MCF 10A (cell line): ENCODE measurements at regions of chr12 and their contacts with region 1.

Region 1: DNA sequence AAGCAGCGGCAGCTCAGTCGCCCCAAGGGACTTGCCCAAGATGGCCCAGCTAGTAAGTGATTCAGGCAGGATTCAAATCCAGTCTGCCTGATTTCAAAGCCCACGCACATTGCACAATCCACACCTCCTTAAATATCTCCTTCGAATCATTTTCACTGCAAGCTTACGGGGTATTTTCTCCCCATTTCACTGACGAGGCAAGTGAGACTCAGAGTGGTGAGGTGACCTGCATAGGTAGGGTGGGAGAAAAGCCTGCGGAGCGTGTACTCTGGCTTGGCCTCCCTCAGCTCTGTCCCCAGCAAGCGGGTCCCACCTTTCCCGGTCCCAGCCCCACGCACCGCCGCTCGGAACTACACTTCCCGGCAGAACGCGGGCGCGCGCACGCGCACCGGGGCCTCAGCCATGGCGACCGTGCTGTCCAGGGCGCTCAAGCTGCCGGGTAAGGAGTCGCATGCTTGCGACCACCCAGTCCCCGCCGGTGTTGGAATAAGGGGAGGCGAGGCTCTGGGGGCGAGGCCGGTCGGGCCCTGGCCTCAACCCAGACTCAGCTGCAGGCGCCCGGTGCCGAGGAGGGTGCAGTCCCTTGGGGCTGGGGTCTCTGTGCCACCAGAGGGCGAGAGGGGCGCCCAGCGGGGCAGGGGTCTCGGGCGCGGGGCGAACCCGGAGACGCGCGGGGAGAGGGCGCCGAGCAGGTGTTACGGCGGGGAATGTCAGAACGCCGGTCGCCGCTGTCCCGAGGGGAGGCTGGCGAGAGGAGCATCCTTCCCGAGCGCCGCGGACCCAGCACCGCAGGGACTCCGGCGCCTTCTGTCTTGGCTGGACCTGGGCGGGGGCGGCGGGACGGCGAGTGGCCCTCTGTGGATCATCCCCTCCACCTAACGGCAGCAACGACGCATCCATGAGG is at the start of gene FAM234B:
- DNase-seq: peak; percentile 66
- H3K4me3 Mint-ChIP-seq: peak within 1 kb of the TSS; percentile 85
- H3K27ac Mint-ChIP-seq: peak within 1 kb of the TSS; percentile 82
- H3K4me1 Mint-ChIP-seq: peaks cover 10% of the 10 kb centered on the region
- H3K27me3 Mint-ChIP-seq: no peaks in the 10 kb centered on the region
- CTCF ChIP-seq: peak; percentile 12
- total RNA-seq, gene FAM234B: 5.4 and 5.7 TPM in 2 replicates

Region 2: GRCh38 chr12:13033476-13033875 is 10.8 kb before region 1 on chr12:
- CTCF ChIA-PET with region 1: no interaction called
- POLR2A ChIA-PET with region 1: interaction called, 13 read pairs
- intact Hi-C with region 1: no loop called
- DNase-seq: no peak
- H3K4me3 Mint-ChIP-seq: no peak overlapping the region
- H3K27ac Mint-ChIP-seq: no peak overlapping the region
- H3K4me1 Mint-ChIP-seq: peaks cover 1% of the 10 kb centered on the region
- H3K27me3 Mint-ChIP-seq: no peaks in the 10 kb centered on the region
- CTCF ChIP-seq: no peak

Region 3: GRCh38 chr12:13425766-13426165 is 381.5 kb after region 1 on chr12:
- CTCF ChIA-PET with region 1: no interaction called
- POLR2A ChIA-PET with region 1: no interaction called
- intact Hi-C with region 1: no loop called
- DNase-seq: peak; percentile 18
- H3K4me3 Mint-ChIP-seq: no peak overlapping the region
- H3K27ac Mint-ChIP-seq: no peak overlapping the region
- H3K4me1 Mint-ChIP-seq: no peaks in the 10 kb centered on the region
- H3K27me3 Mint-ChIP-seq: peaks cover 2% of the 10 kb centered on the region
- CTCF ChIP-seq: no peak